ENCODE measurements at regions of chr12 and their contacts with region 1.

Region 1: DNA sequence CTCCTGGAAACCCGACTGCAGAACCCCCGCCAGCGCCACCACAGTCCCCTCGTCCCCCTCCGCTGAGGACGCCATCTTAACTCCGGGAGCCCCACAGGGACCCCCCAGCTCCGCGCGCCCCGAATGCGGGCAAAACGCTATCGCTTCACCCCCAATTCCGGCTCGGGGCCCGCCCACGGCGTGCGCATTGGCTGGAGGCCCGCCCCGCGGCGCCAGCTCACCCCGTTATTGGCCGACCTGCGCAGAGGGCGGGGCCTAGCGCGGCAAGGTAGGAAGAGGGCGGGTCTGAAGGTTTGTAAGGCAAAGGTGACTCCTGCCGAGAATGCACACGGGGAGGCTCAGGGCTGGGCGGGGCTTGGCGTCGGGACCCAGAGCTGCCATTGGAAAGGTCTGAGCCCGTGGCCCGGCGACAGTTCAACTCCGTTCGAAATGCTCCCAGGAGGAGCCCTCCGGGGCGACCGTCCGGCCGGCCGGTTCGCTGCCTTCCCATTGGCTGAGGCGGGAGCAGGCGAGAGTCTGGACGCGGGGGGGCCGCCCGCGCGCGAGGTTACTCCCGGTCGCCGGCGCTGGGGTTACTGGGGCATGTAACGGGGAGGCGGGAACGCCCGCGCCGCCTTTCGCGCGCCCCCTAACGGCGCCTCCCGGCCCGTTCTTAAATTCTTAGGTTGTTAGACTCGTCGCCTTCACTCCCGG is at the start of gene LPCAT3:
- DNase-seq: peak; percentile 94 to 99 (median 96)
- ATAC-seq: peak; percentile 96
- H3K4me3 ChIP-seq: peak within 1 kb of the TSS; percentile 98
- H3K4me3 Mint-ChIP-seq: peak within 1 kb of the TSS; percentile 87
- H3K27ac ChIP-seq: peak within 1 kb of the TSS; percentile 87 to 89
- H3K27ac Mint-ChIP-seq: peak within 1 kb of the TSS; percentile 62
- H3K4me1 ChIP-seq: peaks cover 24% of the 10 kb centered on the region
- H3K4me1 Mint-ChIP-seq: peaks cover 30% of the 10 kb centered on the region
- H3K27me3 ChIP-seq: no peaks in the 10 kb centered on the region
- H3K27me3 Mint-ChIP-seq: no peaks in the 10 kb centered on the region
- CTCF ChIP-seq: peak; percentile 87
- total RNA-seq, gene LPCAT3: 11.8 to 14.8 TPM

Region 2: DNA sequence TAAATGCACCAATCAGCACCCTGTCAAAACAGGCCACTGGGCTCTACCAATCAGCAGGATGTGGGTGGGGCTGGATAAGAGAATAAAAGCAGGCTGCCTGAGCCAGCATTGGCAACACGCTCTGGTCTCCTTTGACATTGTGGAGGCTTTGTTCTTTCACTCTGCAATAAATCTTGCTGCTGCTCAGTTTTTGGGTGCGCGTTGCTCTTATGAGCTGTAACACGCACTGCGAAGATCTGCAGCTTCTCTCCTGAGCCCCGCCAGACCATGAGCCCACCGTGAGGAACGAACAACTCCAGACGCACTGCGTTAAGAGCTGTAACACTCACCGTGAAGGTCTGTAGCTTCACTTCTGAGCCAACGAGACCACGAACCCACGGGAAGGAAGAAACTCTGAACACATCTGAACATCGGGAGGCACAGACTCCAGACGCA is 309.5 kb before region 1 on chr12:
- CTCF ChIA-PET with region 1: no interaction called
- POLR2A ChIA-PET with region 1: no interaction called
- intact Hi-C with region 1: no loop called
- DNase-seq: peak in 4 of 14 experiments; percentile 16 to 67 (median 39)
- ATAC-seq: peak; percentile 84
- H3K4me3 ChIP-seq: peak overlapping the region; percentile 36
- H3K4me3 Mint-ChIP-seq: peak overlapping the region; percentile 87
- H3K27ac ChIP-seq: peak overlapping the region in 1 of 2 donors; percentile 52
- H3K27ac Mint-ChIP-seq: peak overlapping the region; percentile 79
- H3K4me1 ChIP-seq: peaks cover 11% of the 10 kb centered on the region
- H3K4me1 Mint-ChIP-seq: peaks cover 9% of the 10 kb centered on the region
- H3K27me3 ChIP-seq: peaks cover 5 to 7% of the 10 kb centered on the region in 2 experiments
- H3K27me3 Mint-ChIP-seq: peaks cover 25% of the 10 kb centered on the region
- CTCF ChIP-seq: no peak

Region 3: DNA sequence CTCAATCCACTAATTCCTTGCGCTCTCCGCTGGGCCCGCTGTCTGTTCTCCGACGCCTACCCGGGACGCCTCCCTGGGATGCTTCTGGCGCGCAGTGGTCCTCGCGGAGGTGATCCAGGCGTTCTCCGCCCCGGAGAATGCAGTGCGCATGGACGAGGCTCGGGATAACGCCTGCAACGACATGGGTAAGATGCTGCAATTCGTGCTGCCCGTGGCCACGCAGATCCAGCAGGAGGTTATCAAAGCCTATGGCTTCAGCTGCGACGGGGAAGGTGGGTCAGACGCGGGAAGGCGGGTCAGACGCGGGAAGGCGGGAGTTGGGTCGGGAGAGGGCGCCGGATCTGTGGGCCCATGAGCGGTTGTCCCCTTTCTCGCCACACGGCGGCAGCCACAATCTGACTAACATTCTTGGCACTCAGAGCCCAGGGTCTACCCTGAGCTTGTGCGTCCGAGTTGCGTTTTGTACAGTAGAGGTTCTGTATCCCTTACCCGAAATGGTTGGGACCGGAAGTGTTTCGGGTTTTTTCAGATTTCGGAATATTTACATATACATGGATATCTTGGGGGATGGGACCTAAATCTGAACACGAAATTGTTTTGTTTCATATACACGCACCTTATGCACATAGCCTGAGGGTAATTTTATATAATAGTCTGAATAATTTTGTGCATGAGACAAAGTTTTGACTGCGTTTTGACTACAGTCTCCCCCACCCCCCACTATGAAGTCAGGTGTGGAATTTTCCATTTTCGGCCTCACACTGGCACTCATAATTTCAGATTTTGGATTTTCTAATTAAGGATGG is 73.9 kb before region 1 on chr12:
- CTCF ChIA-PET with region 1: interaction called, 14 read pairs
- POLR2A ChIA-PET with region 1: interaction called, 42 read pairs
- intact Hi-C with region 1: loop called in 1 of 2 experiments (anchors 1 kb)
- DNase-seq: peak; percentile 75 to 94 (median 84)
- ATAC-seq: peak; percentile 51
- H3K4me3 ChIP-seq: peak overlapping the region; percentile 65
- H3K4me3 Mint-ChIP-seq: peak overlapping the region; percentile 97
- H3K27ac ChIP-seq: peak overlapping the region; percentile 96 to 98
- H3K27ac Mint-ChIP-seq: peak overlapping the region; percentile 97
- H3K4me1 ChIP-seq: peaks cover 74% of the 10 kb centered on the region
- H3K4me1 Mint-ChIP-seq: peaks cover 73% of the 10 kb centered on the region
- H3K27me3 ChIP-seq: no peaks in the 10 kb centered on the region
- H3K27me3 Mint-ChIP-seq: no peaks in the 10 kb centered on the region
- CTCF ChIP-seq: peak; percentile 92

Region 4: GRCh38 chr12:6978609-6979011 is 39.9 kb before region 1 on chr12:
- CTCF ChIA-PET with region 1: interaction called, 4 read pairs
- POLR2A ChIA-PET with region 1: interaction called, 5 read pairs
- intact Hi-C with region 1: loop called in 1 of 2 experiments (anchors 2 kb)
- DNase-seq: no peak
- ATAC-seq: no peak
- H3K4me3 ChIP-seq: no peak overlapping the region
- H3K4me3 Mint-ChIP-seq: no peak overlapping the region
- H3K27ac ChIP-seq: no peak overlapping the region
- H3K27ac Mint-ChIP-seq: no peak overlapping the region
- H3K4me1 ChIP-seq: no peaks in the 10 kb centered on the region
- H3K4me1 Mint-ChIP-seq: peaks cover 5% of the 10 kb centered on the region
- H3K27me3 ChIP-seq: no peaks in the 10 kb centered on the region
- H3K27me3 Mint-ChIP-seq: no peaks in the 10 kb centered on the region
- CTCF ChIP-seq: no peak

Region 5: DNA sequence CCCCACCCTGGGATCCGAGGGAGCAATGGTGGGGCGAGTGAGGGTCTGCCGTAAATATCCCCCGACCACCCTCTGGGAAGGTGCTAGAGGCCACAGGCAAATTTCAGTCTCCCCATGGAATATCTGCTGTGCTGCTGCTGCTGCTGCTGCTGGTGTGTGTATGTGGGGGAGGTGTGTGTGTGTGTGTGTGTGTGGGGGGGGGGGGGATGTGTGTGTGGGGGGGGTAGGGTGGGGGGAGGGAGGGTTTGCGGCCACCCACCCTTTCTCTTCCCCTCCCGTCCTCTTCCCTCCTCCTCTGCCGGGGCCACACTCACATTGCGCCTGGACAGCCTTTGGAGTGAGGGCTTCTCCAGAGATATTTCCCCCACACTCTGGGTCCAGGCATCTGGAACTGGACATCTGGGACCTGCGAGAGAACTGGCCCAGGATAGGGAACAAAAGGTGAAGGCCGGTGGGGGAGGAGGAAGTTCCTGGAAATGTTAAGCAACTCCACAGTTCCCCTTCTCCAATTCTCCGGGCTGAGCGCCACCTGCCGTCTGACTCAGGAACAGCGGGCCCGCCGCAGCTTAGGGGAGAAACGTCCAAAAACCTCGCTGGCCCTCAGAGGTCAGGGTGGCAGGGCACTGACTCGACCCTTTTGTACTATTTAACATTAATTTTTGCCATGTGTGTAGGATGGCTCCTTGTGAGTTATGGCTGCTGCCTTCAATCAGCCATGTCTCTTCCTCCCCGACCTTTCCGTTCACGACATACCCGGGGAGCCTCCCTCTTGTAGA is 90.5 kb after region 1 on chr12 and contains the start of gene C1RL:
- CTCF ChIA-PET with region 1: interaction called, 3 read pairs
- POLR2A ChIA-PET with region 1: interaction called, 12 read pairs
- intact Hi-C with region 1: loop called (anchors 5 kb)
- DNase-seq: peak; percentile 55 to 85 (median 76)
- ATAC-seq: peak; percentile 48
- H3K4me3 ChIP-seq: peak within 1 kb of the TSS; percentile 70
- H3K4me3 Mint-ChIP-seq: peak within 1 kb of the TSS; percentile 93
- H3K27ac ChIP-seq: peak within 1 kb of the TSS; percentile 79 to 80
- H3K27ac Mint-ChIP-seq: peak within 1 kb of the TSS; percentile 93
- H3K4me1 ChIP-seq: peaks cover 43% of the 10 kb centered on the region
- H3K4me1 Mint-ChIP-seq: peaks cover 46% of the 10 kb centered on the region
- H3K27me3 ChIP-seq: no peaks in the 10 kb centered on the region
- H3K27me3 Mint-ChIP-seq: no peaks in the 10 kb centered on the region
- CTCF ChIP-seq: peak; percentile 95
- total RNA-seq, gene C1RL: 12.2 to 14.1 TPM